ENCODE measurements at regions of chr13 and their contacts with region 1.

Region 1: DNA sequence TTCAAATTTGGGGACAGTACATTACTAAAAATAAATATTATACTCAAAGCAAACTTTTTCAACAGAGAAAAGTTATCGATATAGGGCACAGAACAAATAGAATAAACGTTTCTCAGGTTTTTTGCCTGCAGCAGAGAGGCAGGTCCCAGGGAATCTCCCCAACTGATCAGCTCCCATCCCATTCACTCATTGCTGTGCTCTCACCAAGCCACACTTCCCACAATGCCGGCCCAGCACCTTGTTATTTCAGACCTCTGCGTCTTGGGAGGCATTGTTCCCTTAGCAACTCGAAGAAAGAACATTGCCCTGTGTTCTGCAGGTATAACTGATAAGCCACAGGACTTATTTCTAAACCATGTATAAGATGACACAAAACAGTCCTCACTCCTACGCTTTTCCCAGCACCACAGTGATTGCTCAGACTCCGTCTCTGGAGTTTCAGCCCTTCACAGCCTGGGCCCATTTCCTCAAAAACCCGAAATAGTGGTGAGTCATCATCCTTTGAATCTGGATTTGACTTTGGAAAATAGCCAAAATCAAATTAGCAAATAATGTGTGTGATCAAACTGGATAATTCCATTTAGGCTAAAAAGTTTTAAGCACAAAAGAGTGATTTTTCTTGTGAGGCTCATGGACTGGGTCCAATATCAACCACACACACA is 100.4 kb downstream of the DCLK1 start:
- DNase-seq: no peak
- ATAC-seq: no peak
- H3K4me3 ChIP-seq: no peak overlapping the region
- H3K4me3 Mint-ChIP-seq: no peak overlapping the region
- H3K27ac ChIP-seq: no peak overlapping the region
- H3K27ac Mint-ChIP-seq: no peak overlapping the region
- H3K4me1 ChIP-seq: no peaks in the 10 kb centered on the region
- H3K4me1 Mint-ChIP-seq: no peaks in the 10 kb centered on the region
- H3K27me3 ChIP-seq: no peaks in the 10 kb centered on the region
- H3K27me3 Mint-ChIP-seq: no peaks in the 10 kb centered on the region
- CTCF ChIP-seq: no peak

Region 2: GRCh38 chr13:35917252-35917941 is 113.4 kb before region 1 on chr13:
- CTCF ChIA-PET with region 1: no interaction called
- POLR2A ChIA-PET with region 1: no interaction called
- intact Hi-C with region 1: no loop called
- DNase-seq: no peak
- ATAC-seq: no peak
- H3K4me3 ChIP-seq: no peak overlapping the region
- H3K4me3 Mint-ChIP-seq: no peak overlapping the region
- H3K27ac ChIP-seq: no peak overlapping the region
- H3K27ac Mint-ChIP-seq: no peak overlapping the region
- H3K4me1 ChIP-seq: no peaks in the 10 kb centered on the region
- H3K4me1 Mint-ChIP-seq: no peaks in the 10 kb centered on the region
- H3K27me3 ChIP-seq: no peaks in the 10 kb centered on the region
- H3K27me3 Mint-ChIP-seq: no peaks in the 10 kb centered on the region
- CTCF ChIP-seq: no peak

Region 3: GRCh38 chr13:36051082-36051481 is 20.3 kb after region 1 on chr13:
- CTCF ChIA-PET with region 1: no interaction called
- POLR2A ChIA-PET with region 1: no interaction called
- intact Hi-C with region 1: loop called in 1 of 2 experiments (anchors 2 kb)
- DNase-seq: no peak
- ATAC-seq: no peak
- H3K4me3 ChIP-seq: no peak overlapping the region
- H3K4me3 Mint-ChIP-seq: no peak overlapping the region
- H3K27ac ChIP-seq: no peak overlapping the region
- H3K27ac Mint-ChIP-seq: no peak overlapping the region
- H3K4me1 ChIP-seq: no peaks in the 10 kb centered on the region
- H3K4me1 Mint-ChIP-seq: no peaks in the 10 kb centered on the region
- H3K27me3 ChIP-seq: no peaks in the 10 kb centered on the region
- H3K27me3 Mint-ChIP-seq: no peaks in the 10 kb centered on the region
- CTCF ChIP-seq: no peak

Region 4: DNA sequence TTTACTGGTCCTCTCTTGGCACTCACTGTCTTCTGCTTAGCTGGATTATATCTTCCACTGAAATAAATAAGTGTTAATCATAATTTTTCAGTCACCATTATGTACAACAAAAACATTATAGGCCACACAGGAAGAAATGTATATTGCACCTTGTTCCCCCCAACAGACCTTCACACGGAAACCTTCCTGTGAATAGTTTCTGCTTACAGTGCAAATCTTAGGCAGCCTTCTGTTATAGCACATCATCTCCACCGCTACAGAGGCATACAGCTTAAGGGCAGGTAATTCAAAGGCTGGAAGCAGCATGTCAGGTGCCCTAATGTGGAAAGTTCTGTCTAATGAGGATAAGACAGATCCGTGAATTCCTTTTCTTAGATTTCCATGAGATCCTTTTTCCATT is 200.4 kb after region 1 on chr13:
- CTCF ChIA-PET with region 1: no interaction called
- POLR2A ChIA-PET with region 1: no interaction called
- intact Hi-C with region 1: no loop called
- DNase-seq: no peak
- ATAC-seq: no peak
- H3K4me3 ChIP-seq: no peak overlapping the region
- H3K4me3 Mint-ChIP-seq: no peak overlapping the region
- H3K27ac ChIP-seq: no peak overlapping the region
- H3K27ac Mint-ChIP-seq: no peak overlapping the region
- H3K4me1 ChIP-seq: no peaks in the 10 kb centered on the region
- H3K4me1 Mint-ChIP-seq: no peaks in the 10 kb centered on the region
- H3K27me3 ChIP-seq: no peaks in the 10 kb centered on the region
- H3K27me3 Mint-ChIP-seq: no peaks in the 10 kb centered on the region
- CTCF ChIP-seq: no peak

Measured in CD8-positive, alpha-beta T cell (primary cell).